ENCODE measurements at regions of chrX and their contacts with region 1.

Region 1: GRCh38 chrX:100413229-100413628 is 3.2 kb upstream of the PCDH19 start:
- DNase-seq: peak; percentile 69
- ATAC-seq: peak; percentile 64
- H3K4me3 ChIP-seq: no peak overlapping the region
- H3K27ac ChIP-seq: no peak overlapping the region
- H3K4me1 ChIP-seq: no peaks in the 10 kb centered on the region
- H3K27me3 ChIP-seq: peaks cover 27% of the 10 kb centered on the region
- CTCF ChIP-seq: peak; percentile 66

Region 2: GRCh38 chrX:99301990-99302389 is 1111.2 kb before region 1 on chrX:
- CTCF ChIA-PET with region 1: no interaction called
- POLR2A ChIA-PET with region 1: no interaction called
- intact Hi-C with region 1: loop called (anchors 5 kb)
- DNase-seq: peak; percentile 18
- ATAC-seq: no peak
- H3K4me3 ChIP-seq: no peak overlapping the region
- H3K27ac ChIP-seq: no peak overlapping the region
- H3K4me1 ChIP-seq: no peaks in the 10 kb centered on the region
- H3K27me3 ChIP-seq: no peaks in the 10 kb centered on the region
- CTCF ChIP-seq: peak; percentile 53

Region 3: GRCh38 chrX:100368167-100368566 is 45.1 kb before region 1 on chrX:
- CTCF ChIA-PET with region 1: interaction called, 10 read pairs
- POLR2A ChIA-PET with region 1: no interaction called
- intact Hi-C with region 1: no loop called
- DNase-seq: peak; percentile 41
- ATAC-seq: peak; percentile 56; the same call in 1 of the 2 replicates
- H3K4me3 ChIP-seq: no peak overlapping the region
- H3K27ac ChIP-seq: no peak overlapping the region
- H3K4me1 ChIP-seq: no peaks in the 10 kb centered on the region
- H3K27me3 ChIP-seq: peaks cover 6% of the 10 kb centered on the region; the same call in 1 of the 2 replicates
- CTCF ChIP-seq: peak; percentile 56

Region 4: GRCh38 chrX:100477958-100478357 is 64.7 kb after region 1 on chrX:
- CTCF ChIA-PET with region 1: no interaction called
- POLR2A ChIA-PET with region 1: no interaction called
- intact Hi-C with region 1: no loop called
- DNase-seq: no peak
- ATAC-seq: no peak
- H3K4me3 ChIP-seq: no peak overlapping the region
- H3K27ac ChIP-seq: no peak overlapping the region
- H3K4me1 ChIP-seq: no peaks in the 10 kb centered on the region
- H3K27me3 ChIP-seq: no peaks in the 10 kb centered on the region
- CTCF ChIP-seq: no peak

Measured in PC-3 (cell line).